Heart right ventricle (tissue), 16 donors: ENCODE measurements at regions of chr3 and their contacts with region 1.

Region 1: GRCh38 chr3:134600685-134601463 is 49.9 kb downstream of the KY start:
- DNase-seq: peak; percentile 29 to 65
- ATAC-seq: peak; percentile 35 to 81 (median 74)
- H3K4me3 ChIP-seq: peak overlapping the region in 2 of 10 donors; percentile 9 to 16
- H3K27ac ChIP-seq: no peak overlapping the region
- H3K4me1 ChIP-seq: peaks cover 0 to 18% (median 0%) of the 10 kb centered on the region in 9 donors
- H3K27me3 ChIP-seq: no peaks in the 10 kb centered on the region
- CTCF ChIP-seq: peak; percentile 90 to 98 (median 96)

Region 2: DNA sequence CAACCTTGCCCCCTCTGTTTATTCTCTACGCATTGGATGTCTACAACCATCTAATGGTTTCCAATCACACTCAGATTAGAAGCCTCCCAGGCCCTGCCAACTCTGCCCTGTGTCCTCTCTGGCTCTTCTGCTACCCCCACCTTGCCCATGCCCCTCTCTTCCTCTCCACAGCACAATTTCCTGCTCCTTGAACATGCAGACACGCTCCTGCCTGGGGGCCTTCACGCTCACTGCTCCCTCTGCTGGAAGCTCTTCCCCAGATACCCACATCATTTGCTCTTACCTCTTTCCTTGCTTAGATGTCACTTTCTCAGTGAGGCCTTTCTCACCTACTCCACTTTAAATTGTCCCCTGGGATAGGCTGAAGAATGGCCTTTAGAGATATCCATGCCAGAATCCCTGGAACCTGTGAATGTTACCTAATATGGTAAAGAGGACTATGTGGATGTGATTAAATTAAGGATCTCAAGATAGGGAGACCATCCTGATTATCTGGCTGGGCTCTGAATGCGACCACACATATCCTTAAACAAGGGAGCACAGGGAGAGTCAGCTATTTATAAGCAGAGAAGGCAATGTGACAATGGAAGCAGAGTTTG is 40.1 kb after region 1 on chr3:
- intact Hi-C with region 1: loop called in 1 of 10 experiments (anchors 5 kb)
- DNase-seq: no peak
- ATAC-seq: no peak
- H3K4me3 ChIP-seq: no peak overlapping the region
- H3K27ac ChIP-seq: peak overlapping the region in 2 of 10 donors; percentile 16 to 22
- H3K4me1 ChIP-seq: peaks cover 0 to 45% (median 25%) of the 10 kb centered on the region in 9 donors
- H3K27me3 ChIP-seq: no peaks in the 10 kb centered on the region
- CTCF ChIP-seq: peak in 7 of 9 donors; percentile 29 to 51 (median 44)

Region 3: DNA sequence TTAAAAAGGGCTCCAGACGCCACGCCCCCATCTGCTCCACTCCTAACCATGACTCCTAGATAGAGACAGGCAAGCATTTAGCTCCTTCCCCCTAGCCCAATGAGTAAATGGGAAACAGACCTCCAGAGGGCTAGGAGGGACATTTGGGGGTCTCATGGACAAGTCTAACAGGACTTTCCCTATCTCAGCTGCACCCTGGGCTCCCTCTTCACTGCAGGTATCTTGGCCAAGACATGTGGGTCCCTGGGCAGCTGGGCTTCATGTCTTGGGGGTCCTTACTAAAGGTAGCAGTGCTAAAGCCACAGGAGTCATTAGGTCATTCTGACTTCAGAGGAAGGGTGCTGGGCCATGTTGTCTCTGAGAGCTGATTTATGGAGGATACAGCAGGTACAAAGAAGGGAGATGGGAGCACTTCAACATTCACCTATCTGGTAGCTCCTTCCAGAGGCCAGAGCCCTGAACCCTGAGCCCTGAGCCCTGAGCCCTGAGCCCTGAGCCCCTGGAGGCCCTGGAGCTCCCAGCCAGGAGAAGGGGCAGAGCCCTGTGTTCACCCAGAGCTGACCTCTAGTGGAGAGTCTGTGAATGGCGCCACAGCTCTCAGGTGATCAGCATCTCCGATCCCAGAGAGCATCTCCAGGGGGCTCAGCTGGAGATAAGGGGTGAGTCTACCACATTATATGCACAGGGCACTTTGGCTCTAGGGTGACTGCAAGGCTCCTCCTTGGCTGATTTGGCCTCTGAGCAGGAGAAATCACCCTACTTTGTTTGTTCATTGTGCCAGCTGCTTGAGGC is 154.1 kb after region 1 on chr3:
- intact Hi-C with region 1: loop called in 2 of 10 experiments (anchors 5 to 10 kb)
- DNase-seq: peak; percentile 13 to 29
- ATAC-seq: peak in 3 of 8 donors; percentile 28 to 43 (median 41)
- H3K4me3 ChIP-seq: no peak overlapping the region
- H3K27ac ChIP-seq: no peak overlapping the region
- H3K4me1 ChIP-seq: peaks cover 0 to 21% (median 5%) of the 10 kb centered on the region in 9 donors
- H3K27me3 ChIP-seq: peaks cover 0 to 6% (median 0%) of the 10 kb centered on the region in 7 donors
- CTCF ChIP-seq: peak; percentile 17 to 69 (median 51)

Region 4: DNA sequence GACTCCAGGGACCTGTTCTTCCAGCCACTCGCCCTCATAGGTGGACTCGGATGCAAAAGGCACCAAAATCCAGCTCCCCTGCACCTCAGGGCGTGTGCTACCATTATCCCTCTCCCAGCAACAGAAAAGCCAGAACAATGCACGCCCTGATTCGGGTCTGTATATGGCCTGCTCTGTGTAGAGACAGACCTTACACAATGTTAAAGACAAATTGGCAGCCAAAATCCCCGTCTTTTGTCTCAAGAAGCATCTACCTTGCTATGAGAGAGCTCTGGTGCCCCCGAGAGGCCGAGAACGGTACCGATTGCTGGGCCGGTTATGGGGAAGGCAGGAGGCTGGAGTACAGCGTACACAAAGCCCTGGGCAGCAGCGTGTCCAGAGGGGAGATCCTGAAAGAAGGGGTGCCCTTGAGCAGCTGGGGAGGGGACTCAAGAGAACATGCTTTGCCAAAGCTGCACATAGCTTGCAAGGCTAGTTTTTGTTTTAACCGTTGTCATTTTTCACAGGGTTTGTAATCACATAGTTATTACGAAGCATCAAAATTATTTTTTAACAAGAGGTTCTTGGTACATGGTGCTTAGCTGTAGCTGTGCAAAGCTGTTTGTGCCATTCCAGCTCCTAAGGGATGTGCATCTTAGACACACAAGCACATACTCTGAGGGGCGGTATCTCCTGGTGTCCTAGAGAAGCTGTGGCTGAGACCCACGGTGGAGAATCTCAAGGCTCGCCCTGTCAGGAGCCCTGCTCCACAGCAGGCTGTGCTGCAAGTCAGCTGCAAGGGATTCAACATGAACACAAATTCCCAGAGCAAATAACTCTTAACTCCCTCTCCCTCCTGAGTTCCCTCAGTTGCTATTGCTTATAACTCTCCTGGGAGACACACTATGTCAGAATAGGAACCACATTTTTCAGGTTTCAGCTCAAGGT is 903.1 kb after region 1 on chr3:
- intact Hi-C with region 1: loop called in 6 of 10 experiments (anchors 5 to 10 kb)
- DNase-seq: peak; percentile 47 to 63
- ATAC-seq: peak; percentile 46 to 85 (median 70)
- H3K4me3 ChIP-seq: no peak overlapping the region
- H3K27ac ChIP-seq: no peak overlapping the region
- H3K4me1 ChIP-seq: peaks cover 0 to 4% (median 0%) of the 10 kb centered on the region in 9 donors
- H3K27me3 ChIP-seq: peaks cover 0 to 53% (median 31%) of the 10 kb centered on the region in 7 donors
- CTCF ChIP-seq: peak; percentile 40 to 74 (median 64)

Region 5: GRCh38 chr3:135887220-135887619 is 1286.3 kb after region 1 on chr3:
- intact Hi-C with region 1: loop called in 4 of 10 experiments (anchors 5 to 10 kb)
- DNase-seq: no peak
- ATAC-seq: no peak
- H3K4me3 ChIP-seq: no peak overlapping the region
- H3K27ac ChIP-seq: no peak overlapping the region
- H3K4me1 ChIP-seq: no peaks in the 10 kb centered on the region
- H3K27me3 ChIP-seq: no peaks in the 10 kb centered on the region
- CTCF ChIP-seq: no peak

Region 6: GRCh38 chr3:135895106-135895733 is 1294.3 kb after region 1 on chr3:
- intact Hi-C with region 1: loop called in 8 of 10 experiments (anchors 2 to 10 kb)
- DNase-seq: peak; percentile 57 to 70
- ATAC-seq: peak in 4 of 8 donors; percentile 52 to 66 (median 59)
- H3K4me3 ChIP-seq: no peak overlapping the region
- H3K27ac ChIP-seq: no peak overlapping the region
- H3K4me1 ChIP-seq: no peaks in the 10 kb centered on the region
- H3K27me3 ChIP-seq: no peaks in the 10 kb centered on the region
- CTCF ChIP-seq: peak; percentile 61 to 90 (median 84)